ENCODE measurements at regions of chr2 and their contacts with region 1.

Region 1: DNA sequence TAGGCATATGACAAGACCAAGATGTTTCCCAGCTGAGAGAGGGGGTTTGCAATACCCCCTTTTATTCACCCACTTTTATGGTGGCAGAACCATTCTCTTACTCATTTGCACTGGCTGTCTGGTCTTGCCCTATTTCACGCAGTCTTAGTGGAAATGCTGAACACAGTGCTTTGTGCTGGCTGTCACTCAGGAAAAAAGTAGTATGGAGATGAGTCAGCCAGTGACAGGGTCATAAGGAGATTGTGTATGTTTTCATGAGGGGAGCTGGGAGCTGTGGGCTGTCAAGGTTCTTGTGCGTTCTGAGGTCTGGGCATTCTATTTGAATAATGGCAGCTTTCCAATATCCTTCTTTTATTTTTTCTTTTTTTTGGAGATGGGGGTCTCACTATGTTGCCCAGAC is 10.9 kb upstream of the CNRIP1 start:
- DNase-seq: no peak
- ATAC-seq: peak; percentile 73
- H3K4me3 Mint-ChIP-seq: no peak overlapping the region
- H3K27ac Mint-ChIP-seq: no peak overlapping the region
- H3K4me1 Mint-ChIP-seq: no peaks in the 10 kb centered on the region
- H3K27me3 Mint-ChIP-seq: peaks cover 26% of the 10 kb centered on the region

Region 2: GRCh38 chr2:67451086-67451832 is 879.4 kb before region 1 on chr2:
- CTCF ChIA-PET with region 1: no interaction called
- POLR2A ChIA-PET with region 1: no interaction called
- intact Hi-C with region 1: no loop called
- DNase-seq: no peak
- ATAC-seq: no peak
- H3K4me3 Mint-ChIP-seq: no peak overlapping the region
- H3K27ac Mint-ChIP-seq: no peak overlapping the region
- H3K4me1 Mint-ChIP-seq: no peaks in the 10 kb centered on the region
- H3K27me3 Mint-ChIP-seq: peaks cover 11% of the 10 kb centered on the region

Region 3: DNA sequence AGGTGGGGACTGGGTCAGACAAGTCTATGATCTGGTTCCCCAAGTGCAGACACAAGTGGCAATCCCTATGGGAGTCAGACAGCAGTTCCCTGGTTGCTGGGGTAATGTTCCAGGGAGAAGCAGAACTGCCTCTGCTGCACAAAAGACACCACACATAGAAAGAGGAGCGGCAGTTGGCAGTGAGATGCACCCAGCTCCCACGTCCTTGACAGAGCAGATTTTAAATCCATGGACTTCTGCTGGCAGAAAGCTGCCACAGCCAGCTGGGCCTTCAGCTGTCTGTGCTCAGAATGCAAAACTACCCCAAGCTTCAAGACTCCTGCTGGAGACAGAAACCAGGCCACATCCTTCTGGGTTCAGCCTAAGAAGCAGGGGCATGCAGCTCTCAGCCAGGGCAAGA is 786.4 kb before region 1 on chr2:
- CTCF ChIA-PET with region 1: no interaction called
- POLR2A ChIA-PET with region 1: no interaction called
- intact Hi-C with region 1: no loop called
- DNase-seq: no peak
- ATAC-seq: no peak
- H3K4me3 Mint-ChIP-seq: no peak overlapping the region
- H3K27ac Mint-ChIP-seq: no peak overlapping the region
- H3K4me1 Mint-ChIP-seq: no peaks in the 10 kb centered on the region
- H3K27me3 Mint-ChIP-seq: peaks cover 2% of the 10 kb centered on the region

Region 4: DNA sequence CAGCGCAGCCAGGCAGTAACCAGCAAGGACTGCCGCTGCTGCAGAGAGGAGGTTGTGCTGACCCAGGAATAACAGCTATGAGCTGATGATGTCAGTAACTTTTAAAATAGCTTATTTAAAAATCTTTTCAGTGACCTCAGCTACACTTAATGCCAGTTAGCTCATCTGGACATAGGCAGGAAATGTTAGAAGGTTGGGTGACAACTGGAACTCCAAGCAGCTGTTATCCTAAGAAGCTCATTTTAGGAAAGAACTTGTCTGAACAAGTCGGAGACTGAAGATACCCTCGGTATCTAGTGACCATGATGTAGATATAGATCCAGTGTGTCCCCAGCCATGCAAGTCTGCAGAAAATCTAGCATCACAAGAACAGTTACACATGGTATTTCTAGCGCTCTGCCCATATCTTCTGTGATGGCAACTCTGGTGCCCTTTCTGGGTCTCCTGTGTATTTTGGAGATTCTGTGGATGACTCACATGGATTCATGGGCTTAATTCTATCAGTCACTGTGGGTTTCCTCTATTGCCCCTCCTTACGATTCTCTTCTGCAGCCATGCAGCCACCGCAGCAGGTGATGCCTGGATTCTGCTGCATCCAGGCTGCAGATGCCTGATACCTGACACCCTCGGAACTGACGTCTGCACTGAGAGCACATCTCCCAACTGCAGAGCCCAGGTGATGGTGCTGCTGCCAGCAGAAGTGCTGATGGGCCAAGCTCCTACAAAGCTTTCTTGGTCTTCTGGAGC is 14.6 kb after region 1 on chr2:
- CTCF ChIA-PET with region 1: no interaction called
- POLR2A ChIA-PET with region 1: no interaction called
- intact Hi-C with region 1: no loop called
- DNase-seq: no peak
- ATAC-seq: no peak
- H3K4me3 Mint-ChIP-seq: no peak overlapping the region
- H3K27ac Mint-ChIP-seq: no peak overlapping the region
- H3K4me1 Mint-ChIP-seq: no peaks in the 10 kb centered on the region
- H3K27me3 Mint-ChIP-seq: peaks cover 31% of the 10 kb centered on the region

Region 5: GRCh38 chr2:68974946-68975665 is 644.4 kb after region 1 on chr2:
- CTCF ChIA-PET with region 1: no interaction called
- POLR2A ChIA-PET with region 1: interaction called, 11 read pairs
- intact Hi-C with region 1: no loop called
- DNase-seq: no peak
- ATAC-seq: no peak
- H3K4me3 Mint-ChIP-seq: no peak overlapping the region
- H3K27ac Mint-ChIP-seq: no peak overlapping the region
- H3K4me1 Mint-ChIP-seq: no peaks in the 10 kb centered on the region
- H3K27me3 Mint-ChIP-seq: peaks cover 17% of the 10 kb centered on the region

Measured in activated CD4-positive, alpha-beta T cell treated with anti-CD3 and anti-CD28 coated beads for 36 hours (primary cell).